ENCODE measurements at regions of chr12 and their contacts with region 1.

Region 1: DNA sequence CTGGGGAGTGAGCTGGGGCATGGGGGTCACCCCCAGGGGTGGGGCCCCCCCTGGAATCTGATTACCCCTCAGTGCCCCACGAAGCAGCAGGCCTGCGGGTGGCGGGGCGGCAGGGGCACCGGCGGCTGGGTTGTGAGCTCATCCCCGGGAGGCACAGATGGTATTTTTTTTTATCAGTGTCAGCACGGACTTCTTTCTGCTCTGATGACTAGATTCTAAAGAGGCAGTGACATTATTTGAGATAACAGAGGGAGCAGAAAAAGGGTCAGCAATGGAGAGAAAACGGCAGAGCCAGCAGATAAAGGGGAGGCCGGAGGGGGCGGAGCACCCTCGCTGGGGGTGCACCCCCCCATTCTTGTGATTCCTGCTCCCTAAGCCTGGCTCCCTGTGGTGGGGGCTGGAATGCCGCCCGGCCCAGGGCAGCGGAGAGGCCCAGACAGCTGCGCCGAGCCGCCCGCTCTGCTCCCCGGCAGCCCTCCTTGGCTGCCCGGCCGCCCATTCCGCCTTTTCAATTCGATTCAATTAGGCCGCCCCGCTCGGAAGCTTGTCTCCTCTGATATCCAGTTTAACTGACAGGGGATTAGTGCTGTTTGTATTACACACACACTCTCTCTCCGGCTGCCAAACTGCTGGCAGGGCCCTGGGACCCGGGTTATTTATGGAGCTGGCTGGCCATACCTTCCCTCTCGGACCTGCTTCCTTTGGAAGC is 32.9 kb downstream of the MVK start:
- DNase-seq: no peak
- ATAC-seq: peak in 3 of 4 donors; percentile 21 to 72 (median 70)
- H3K4me3 ChIP-seq: no peak overlapping the region
- H3K27ac ChIP-seq: no peak overlapping the region
- H3K4me1 ChIP-seq: no peaks in the 10 kb centered on the region
- H3K27me3 ChIP-seq: no peaks in the 10 kb centered on the region
- CTCF ChIP-seq: no peak

Region 2: GRCh38 chr12:109309381-109310246 is 296.9 kb before region 1 on chr12:
- intact Hi-C with region 1: no loop called
- DNase-seq: peak in 1 of 6 donors; percentile 68
- ATAC-seq: peak; percentile 56 to 76 (median 68)
- H3K4me3 ChIP-seq: peak overlapping the region; percentile 3 to 50 (median 26)
- H3K27ac ChIP-seq: no peak overlapping the region
- H3K4me1 ChIP-seq: peaks cover 0 to 11% (median 8%) of the 10 kb centered on the region in 3 donors
- H3K27me3 ChIP-seq: peaks cover 0 to 2% (median 0%) of the 10 kb centered on the region in 4 donors
- CTCF ChIP-seq: no peak

Region 3: DNA sequence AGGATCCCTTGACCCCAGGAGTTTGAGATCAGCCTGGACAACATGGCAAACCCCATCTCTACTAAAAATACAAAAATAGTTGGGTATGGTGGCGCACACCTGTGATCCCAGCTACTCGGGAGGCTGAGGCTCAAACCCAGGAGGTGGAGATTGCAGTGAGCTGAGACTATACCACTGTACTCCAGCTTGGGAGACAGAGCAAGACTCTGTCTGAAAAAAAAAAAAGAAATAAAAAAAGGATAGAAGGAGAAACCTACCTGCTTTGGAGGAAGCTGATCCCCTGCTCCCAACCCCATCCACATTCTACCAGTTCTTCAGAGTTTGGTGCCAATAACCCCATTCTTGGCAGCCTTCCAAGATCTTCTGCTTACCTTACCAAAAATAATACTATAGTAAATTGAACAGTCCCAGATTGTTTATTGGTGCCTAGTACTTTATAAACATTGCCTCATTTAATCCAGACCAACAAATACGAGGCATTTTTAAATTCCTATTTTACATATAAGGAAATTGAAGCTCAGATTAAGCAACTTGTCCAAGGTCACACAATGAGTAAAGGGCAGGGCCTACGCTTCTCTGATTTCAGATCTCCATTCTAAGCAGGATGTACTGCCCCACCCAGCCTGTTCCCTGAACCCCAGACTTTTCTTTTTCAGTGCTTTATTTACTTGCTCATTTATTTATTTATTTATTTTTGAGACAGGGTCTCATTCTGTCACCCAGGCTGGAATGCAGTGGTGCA is 74.0 kb after region 1 on chr12:
- intact Hi-C with region 1: no loop called
- DNase-seq: peak in 1 of 6 donors; percentile 25
- ATAC-seq: peak; percentile 24 to 66 (median 48)
- H3K4me3 ChIP-seq: no peak overlapping the region
- H3K27ac ChIP-seq: peak overlapping the region in 2 of 4 donors; percentile 44 to 68
- H3K4me1 ChIP-seq: no peaks in the 10 kb centered on the region
- H3K27me3 ChIP-seq: no peaks in the 10 kb centered on the region
- CTCF ChIP-seq: no peak

Region 4: DNA sequence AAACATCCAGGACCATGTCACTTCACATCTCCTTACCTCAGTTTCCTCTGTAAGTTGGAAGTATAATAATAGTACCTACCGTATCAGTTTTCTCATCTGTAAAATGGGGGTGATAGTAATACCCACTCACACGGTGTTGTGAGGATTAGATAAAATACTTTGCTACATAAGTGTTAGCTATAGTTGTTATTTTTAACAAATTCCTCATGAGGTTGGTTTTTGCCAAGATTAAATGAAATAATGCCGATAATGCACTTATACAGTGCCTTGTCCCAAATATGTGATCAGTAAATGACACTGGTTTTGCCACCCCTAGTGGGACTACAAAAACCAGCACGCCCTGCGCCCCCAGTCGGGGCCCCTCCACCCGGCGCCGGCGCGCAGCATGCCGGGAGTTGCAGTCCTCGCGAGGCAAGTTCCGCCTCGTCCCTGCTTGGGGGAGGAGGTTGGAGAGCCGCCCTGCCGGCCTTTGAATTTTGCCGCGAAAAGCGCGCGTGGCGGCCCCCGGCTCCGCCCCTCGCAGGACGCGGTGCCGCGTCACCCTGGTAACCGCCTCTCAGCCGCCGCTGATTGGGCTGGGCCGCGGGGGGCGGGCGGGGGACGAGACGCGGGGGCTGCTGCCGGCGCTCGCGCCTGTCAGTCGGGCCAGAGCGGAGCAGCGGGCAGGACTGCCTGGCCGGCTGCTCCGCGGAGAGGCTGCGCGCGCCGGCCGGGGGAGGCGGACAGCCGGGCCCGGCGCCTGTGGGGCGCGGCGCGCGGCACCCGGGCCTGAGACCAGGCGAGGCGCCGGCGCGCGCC is 106.9 kb after region 1 on chr12 and contains the start of gene FAM222A:
- intact Hi-C with region 1: loop called in 1 of 3 experiments (anchors 10 kb)
- DNase-seq: peak; percentile 96 to 98 (median 98)
- ATAC-seq: peak; percentile 88 to 94 (median 89)
- H3K4me3 ChIP-seq: peak within 1 kb of the TSS; percentile 51 to 69 (median 61)
- H3K27ac ChIP-seq: peak within 1 kb of the TSS in 3 of 4 donors; percentile 28 to 48 (median 44)
- H3K4me1 ChIP-seq: peaks cover 0 to 15% (median 12%) of the 10 kb centered on the region in 3 donors
- H3K27me3 ChIP-seq: no peaks in the 10 kb centered on the region
- CTCF ChIP-seq: no peak
- total RNA-seq, gene FAM222A: 2.1 to 4.3 (median 3.3) TPM

Region 5: DNA sequence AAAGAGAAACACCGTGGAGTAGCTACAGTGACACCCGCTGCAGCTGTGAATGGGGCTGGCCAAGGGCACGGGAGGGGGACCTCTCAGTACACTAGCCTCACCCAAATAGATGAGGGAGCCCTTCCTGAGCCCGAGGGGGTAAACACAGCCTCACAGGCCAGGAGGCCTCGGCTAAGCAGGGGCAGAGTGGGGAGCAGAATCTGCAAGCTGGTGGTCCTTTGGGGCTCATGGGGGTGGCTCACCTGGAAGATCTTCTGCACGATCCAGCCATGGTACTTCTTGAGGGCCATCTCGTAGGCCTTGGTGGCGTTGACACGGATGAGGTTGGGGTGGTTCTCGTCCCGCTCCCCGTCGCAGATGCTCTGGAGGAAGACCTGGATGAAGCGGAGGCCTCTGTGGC is 248.9 kb after region 1 on chr12:
- intact Hi-C with region 1: no loop called
- DNase-seq: no peak
- ATAC-seq: no peak
- H3K4me3 ChIP-seq: no peak overlapping the region
- H3K27ac ChIP-seq: no peak overlapping the region
- H3K4me1 ChIP-seq: no peaks in the 10 kb centered on the region
- H3K27me3 ChIP-seq: no peaks in the 10 kb centered on the region
- CTCF ChIP-seq: no peak

Measured in pancreas (tissue), 10 donors.